Calu3 (cell line): ENCODE measurements at regions of chr11 and their contacts with region 1.

Region 1: DNA sequence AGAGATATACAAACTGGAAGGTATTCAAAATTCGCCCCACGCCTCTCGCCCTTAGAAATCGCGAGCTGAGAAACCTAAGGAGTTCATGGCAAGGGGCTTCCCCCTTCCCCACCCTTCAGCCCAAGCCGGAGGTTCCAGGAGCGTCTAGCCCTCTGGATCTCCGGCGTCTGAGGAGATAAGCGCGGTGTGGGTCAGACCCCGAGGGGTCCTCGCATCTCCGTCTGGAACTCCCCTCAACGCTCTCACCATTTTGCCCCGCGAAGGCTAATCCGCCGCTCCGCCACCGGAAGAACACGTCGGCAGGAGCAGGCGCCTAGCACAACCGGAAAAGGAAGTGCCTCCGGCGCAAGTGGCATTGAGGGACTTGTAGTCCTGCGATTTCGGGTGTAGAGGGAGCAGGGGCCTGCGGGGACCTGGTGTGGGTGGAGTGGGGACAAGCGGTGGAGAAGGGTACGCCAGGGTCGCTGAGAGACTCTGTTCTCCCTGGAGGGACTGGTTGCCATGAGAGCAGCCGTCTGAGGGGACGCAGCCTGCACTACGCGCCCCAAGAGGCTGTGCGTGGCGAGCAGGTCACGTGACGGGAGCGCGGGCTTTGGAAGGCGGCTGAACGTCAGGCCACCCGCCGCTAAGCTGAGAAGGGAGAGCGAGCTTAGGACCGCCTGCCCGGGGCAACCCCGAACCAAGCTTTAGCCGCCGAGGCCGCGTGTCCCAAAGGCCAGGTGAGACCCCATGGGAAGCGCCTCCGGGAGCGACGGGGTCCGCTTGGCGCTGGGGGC is at the starts of genes FEN1 and TMEM258:
- DNase-seq: peak; percentile 90
- H3K4me3 Mint-ChIP-seq: peak within 1 kb of the TSS; percentile 93
- H3K27ac Mint-ChIP-seq: peak within 1 kb of the TSS; percentile 99
- H3K4me1 Mint-ChIP-seq: peaks cover 36% of the 10 kb centered on the region
- H3K27me3 Mint-ChIP-seq: no peaks in the 10 kb centered on the region
- CTCF ChIP-seq: no peak
- total RNA-seq, gene FEN1: 72.4 TPM in 2 replicates
- total RNA-seq, gene TMEM258: 140 and 146 TPM in 2 replicates

Region 2: GRCh38 chr11:61756452-61757212 is 35.9 kb before region 1 on chr11:
- CTCF ChIA-PET with region 1: interaction called, 15 read pairs
- intact Hi-C with region 1: no loop called
- DNase-seq: peak; percentile 89
- H3K4me3 Mint-ChIP-seq: peak overlapping the region; percentile 99
- H3K27ac Mint-ChIP-seq: peak overlapping the region; percentile 94
- H3K4me1 Mint-ChIP-seq: peaks cover 79% of the 10 kb centered on the region
- H3K27me3 Mint-ChIP-seq: no peaks in the 10 kb centered on the region
- CTCF ChIP-seq: no peak

Region 3: DNA sequence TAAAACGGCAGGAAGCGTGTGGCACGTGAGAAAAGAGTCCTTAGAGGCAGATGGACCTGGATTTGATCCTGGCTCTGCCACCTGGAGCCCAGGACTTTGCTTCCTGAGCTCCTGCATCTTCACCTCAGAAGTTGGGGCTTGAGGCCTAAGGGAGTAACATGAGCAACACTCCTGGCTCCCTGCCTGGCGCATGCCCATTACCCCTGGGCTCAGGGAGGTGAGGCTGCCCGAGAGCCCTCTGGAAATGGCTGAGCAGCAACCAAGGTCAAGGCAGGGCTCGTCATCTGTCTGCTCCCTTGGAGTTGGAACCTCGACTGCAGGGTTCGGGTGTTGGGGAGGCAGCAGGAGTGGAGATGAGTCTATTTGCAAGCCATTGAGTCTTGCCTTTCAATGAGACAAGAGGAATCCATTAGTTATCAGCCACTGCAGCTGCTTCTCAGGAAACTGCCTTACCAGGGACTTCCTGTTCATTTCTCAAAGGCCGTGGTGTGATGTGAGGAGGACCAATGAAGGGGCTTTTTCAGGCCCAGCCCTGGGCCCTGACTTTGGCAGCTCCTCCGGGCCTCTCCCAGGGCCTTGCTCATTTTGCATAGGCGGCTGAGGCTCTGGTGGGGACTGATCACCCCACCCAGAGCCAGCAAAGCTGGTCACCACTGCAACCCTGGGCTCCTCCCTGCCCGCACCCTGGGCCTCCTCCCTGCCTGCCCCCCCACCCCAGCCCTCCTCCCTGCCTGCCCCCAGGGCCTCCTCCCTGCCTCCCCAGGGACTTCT is 42.0 kb after region 1 on chr11:
- CTCF ChIA-PET with region 1: no interaction called
- intact Hi-C with region 1: no loop called
- DNase-seq: no peak
- H3K4me3 Mint-ChIP-seq: no peak overlapping the region
- H3K27ac Mint-ChIP-seq: no peak overlapping the region
- H3K4me1 Mint-ChIP-seq: no peaks in the 10 kb centered on the region
- H3K27me3 Mint-ChIP-seq: peaks cover 67% of the 10 kb centered on the region
- CTCF ChIP-seq: no peak

Region 4: DNA sequence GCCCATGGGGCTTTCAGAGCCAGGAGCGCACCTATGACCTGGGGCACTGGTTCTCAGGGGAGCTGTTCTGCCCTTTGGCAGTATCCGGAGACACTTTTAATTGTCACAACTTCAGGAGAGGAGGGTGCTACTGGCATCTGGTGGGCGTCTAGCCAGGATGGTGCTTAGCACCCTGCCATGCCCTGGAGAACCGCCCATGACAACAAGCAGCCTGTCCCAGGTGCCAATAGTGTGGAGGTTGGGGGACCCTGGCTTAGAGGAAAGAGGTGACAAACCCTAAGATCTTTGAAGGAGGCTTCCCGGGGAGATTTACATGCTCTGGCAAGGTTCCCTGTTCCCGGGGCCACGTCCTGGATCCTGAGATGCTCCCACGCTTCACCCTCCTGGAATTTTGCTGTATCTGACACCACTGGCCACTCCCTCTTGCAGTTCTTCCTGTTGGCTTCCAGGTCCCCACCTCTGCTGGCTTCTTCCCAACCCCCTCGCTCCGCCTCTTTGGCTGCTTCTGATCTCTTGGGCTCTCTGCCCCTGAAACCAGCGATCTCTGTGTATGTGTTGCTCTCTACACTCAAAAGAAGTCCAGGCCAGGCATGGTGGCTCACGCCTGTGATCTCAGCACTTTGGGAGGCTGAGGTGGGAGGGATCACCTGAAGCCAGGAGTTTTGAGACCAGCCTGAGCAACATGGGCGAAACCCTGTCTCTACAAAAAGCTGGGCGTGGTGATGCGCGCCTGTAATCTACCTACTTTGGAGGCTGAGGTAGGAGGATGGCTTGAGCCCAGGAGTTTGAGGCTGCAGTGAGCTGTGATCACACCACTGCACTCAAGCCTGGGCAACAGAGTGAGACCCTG is 67.8 kb after region 1 on chr11:
- CTCF ChIA-PET with region 1: no interaction called
- intact Hi-C with region 1: no loop called
- DNase-seq: peak; percentile 22
- H3K4me3 Mint-ChIP-seq: no peak overlapping the region
- H3K27ac Mint-ChIP-seq: no peak overlapping the region
- H3K4me1 Mint-ChIP-seq: peaks cover 9% of the 10 kb centered on the region
- H3K27me3 Mint-ChIP-seq: no peaks in the 10 kb centered on the region
- CTCF ChIP-seq: no peak

Region 5: DNA sequence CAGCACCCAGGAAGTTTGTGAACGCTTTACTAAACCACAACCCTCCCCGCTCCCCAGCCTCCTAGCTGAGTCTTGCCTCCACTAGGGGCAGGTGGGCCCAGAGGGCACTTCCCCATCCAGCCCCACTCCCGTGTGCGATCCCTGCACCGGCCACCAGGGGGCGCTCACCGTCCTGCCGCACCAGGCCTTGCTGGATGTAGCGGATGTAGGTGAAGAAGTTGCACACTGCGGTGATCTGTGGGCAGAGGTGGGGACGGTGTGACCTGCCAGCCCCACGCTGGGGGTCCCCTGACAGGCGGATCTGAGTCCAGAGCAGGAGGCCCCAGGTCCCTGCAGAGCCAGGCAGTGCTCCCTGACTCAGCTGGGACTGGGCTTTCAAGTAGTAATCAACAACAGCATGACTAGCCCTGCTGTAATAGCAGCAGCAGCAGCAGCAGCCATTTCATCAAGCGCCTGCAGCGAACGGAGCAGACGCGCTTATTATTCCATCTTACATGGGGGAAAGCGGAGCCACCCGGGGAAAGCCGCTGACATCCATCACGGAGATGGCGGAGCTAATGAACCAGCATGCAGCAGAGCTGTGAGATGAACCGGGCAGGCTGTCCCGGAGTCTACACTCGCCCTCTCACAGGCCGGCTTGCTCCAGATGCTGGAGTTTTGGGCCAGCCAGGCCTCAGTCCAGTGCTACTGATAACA is 106.8 kb after region 1 on chr11:
- CTCF ChIA-PET with region 1: interaction called, 6 read pairs
- intact Hi-C with region 1: loop called (anchors 10 kb)
- DNase-seq: peak; percentile 95
- H3K4me3 Mint-ChIP-seq: no peak overlapping the region
- H3K27ac Mint-ChIP-seq: peak overlapping the region; percentile 37
- H3K4me1 Mint-ChIP-seq: no peaks in the 10 kb centered on the region
- H3K27me3 Mint-ChIP-seq: peaks cover 45% of the 10 kb centered on the region
- CTCF ChIP-seq: peak; percentile 99

Region 6: DNA sequence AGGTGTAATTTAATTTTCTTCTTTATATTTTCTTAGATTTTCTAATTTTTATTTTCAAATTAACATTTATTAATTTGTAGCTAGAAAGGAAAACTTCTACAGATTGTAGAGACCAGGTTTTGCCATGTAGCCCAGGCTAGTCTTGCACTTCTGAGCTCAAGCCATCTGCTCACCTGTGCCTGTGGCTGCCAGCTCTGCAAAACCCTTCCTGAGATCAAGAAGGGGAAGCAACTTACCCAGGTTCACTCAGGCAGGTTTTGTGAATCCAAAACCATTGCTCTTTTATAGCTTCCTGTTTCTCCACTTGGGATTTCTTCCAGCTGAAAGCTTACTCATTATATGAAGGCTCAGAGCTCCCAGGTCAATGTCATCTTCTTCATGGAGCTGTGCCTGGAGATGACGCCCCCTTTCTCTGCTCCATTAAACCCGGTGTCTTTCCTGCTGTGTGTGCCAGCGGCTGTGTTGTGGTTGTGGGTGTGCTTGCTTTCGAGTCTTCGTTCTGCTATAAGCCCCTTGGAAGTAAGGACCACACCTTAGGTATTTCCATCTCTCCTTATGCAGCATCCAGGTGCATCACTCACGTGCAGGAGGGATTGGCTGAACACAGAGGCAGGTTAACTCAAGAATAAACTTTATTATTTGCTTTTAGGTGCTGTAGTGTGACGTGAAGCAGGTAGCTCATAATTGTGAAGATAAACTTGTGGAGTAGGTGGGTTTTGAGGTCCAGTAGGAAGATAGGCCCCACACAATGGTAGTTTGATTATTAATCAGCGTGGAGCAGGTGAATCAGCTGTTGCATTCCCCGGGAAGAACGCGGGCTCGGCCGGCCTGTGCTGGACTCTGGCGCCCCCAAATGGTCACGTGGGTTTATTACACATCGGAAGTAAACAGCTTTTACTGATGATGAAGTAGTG is 289.1 kb after region 1 on chr11:
- CTCF ChIA-PET with region 1: interaction called, 32 read pairs
- intact Hi-C with region 1: no loop called
- DNase-seq: peak; percentile 87
- H3K4me3 Mint-ChIP-seq: no peak overlapping the region
- H3K27ac Mint-ChIP-seq: no peak overlapping the region
- H3K4me1 Mint-ChIP-seq: no peaks in the 10 kb centered on the region
- H3K27me3 Mint-ChIP-seq: no peaks in the 10 kb centered on the region
- CTCF ChIP-seq: peak; percentile 90